SK-N-SH (cell line): ENCODE measurements at regions of chr14 and their contacts with region 1.

Region 1: DNA sequence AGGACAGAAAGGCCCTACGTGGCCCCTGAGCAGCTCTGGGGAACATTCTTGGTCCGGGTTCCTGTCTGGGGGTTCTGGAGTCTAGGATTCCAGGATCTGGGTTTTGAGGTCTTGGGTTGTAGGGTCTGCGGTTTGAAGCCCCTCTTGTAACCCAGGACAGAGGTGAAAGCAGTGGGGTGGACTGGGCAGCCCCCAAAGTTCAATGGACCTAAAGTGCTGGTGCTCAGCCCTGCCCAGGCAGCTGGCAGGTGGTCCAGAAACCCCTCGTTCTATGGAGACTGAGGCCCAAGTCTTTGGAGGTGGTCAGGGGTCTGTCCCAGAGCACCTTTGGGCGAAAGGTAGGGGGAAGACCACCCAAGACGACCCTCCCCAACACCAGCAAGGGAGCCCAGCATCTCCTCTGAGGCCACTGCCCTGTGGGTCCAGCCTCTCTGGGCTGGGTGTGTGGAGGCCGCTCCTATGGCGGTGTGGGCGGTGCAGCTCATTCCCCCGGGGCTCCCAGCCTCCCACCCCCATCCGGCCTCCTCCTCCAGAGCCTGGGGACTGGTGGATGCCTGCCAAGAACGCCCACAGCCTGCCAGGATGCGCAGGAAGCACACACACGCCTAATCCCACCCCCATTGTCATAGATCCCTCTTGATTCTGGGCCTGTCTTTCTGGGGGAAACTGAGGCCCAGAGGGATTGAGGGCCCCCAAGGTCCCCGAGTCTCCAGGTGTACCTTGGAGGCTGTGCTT is 30.2 kb upstream of the ANKRD9 start:
- DNase-seq: peak; percentile 64
- H3K4me3 ChIP-seq: no peak overlapping the region
- H3K27ac ChIP-seq: no peak overlapping the region; a peak in 1 of 4 replicates
- H3K4me1 ChIP-seq: peaks cover 14 to 22% of the 10 kb centered on the region in 2 experiments; a peak in 2 of 4 replicates
- H3K27me3 ChIP-seq: no peaks in the 10 kb centered on the region
- CTCF ChIP-seq: no peak
- EP300 ChIP-seq: no peak
- RAD21 ChIP-seq: no peak

Region 2: GRCh38 chr14:102524466-102525218 is 15.1 kb before region 1 on chr14:
- CTCF ChIA-PET with region 1: interaction called, 10 read pairs
- POLR2A ChIA-PET with region 1: interaction called, 4 read pairs
- DNase-seq: peak; percentile 99
- H3K4me3 ChIP-seq: peak overlapping the region; percentile 59 to 69
- H3K27ac ChIP-seq: peak overlapping the region; percentile 63 to 80
- H3K4me1 ChIP-seq: peaks cover 0 to 12% of the 10 kb centered on the region in 2 experiments; a peak in 2 of 4 replicates
- H3K27me3 ChIP-seq: no peaks in the 10 kb centered on the region
- CTCF ChIP-seq: peak; percentile 97
- EP300 ChIP-seq: peak in 1 of 2 experiments; percentile 51; a peak in 2 of 4 replicates
- RAD21 ChIP-seq: peak; percentile 77

Region 3: DNA sequence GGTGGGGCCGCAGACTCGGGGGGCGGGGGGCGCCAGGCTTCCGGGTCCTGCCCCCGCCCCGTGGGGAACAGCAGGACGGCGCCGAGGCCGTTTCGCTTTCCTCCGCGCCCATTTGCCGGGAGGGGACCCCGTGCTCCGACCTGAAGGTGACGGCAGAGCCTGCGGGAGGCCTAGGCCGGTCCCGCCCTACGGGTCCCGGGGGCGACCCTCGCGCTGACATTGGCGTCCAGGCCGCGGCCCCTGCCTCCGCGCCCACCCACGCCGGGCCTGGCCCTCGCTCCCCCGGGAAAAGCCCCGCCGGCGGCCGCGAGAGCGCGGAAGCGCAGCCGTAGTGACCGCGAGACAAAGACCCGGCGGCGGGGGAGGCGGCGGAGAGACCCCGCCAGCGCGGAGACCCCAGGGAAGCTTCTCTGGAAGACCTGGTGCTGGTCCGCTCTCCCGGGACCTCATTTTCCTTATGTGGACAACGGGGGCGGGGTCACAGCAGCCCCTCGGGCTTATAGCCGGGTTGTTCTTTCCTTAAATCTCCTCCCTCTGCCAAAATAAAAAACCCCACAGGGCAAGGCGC is 15.6 kb after region 1 on chr14:
- CTCF ChIA-PET with region 1: no interaction called
- POLR2A ChIA-PET with region 1: no interaction called
- DNase-seq: peak; percentile 29
- H3K4me3 ChIP-seq: no peak overlapping the region
- H3K27ac ChIP-seq: no peak overlapping the region
- H3K4me1 ChIP-seq: no peaks in the 10 kb centered on the region
- H3K27me3 ChIP-seq: no peaks in the 10 kb centered on the region
- CTCF ChIP-seq: no peak
- EP300 ChIP-seq: no peak
- RAD21 ChIP-seq: no peak